IMR-90 (cell line): ENCODE measurements at regions of chr2 and their contacts with region 1.

Region 1: GRCh38 chr2:69026026-69026425 is 13.0 kb downstream of the ANTXR1 start:
- DNase-seq: peak; percentile 46
- ATAC-seq: peak; percentile 70
- H3K4me3 ChIP-seq: no peak overlapping the region
- H3K27ac ChIP-seq: no peak overlapping the region
- H3K4me1 ChIP-seq: peaks cover 18% of the 10 kb centered on the region
- H3K27me3 ChIP-seq: no peaks in the 10 kb centered on the region
- CTCF ChIP-seq: peak; percentile 56
- POLR2A ChIP-seq: no peak
- RAD21 ChIP-seq: peak; percentile 81

Region 2: DNA sequence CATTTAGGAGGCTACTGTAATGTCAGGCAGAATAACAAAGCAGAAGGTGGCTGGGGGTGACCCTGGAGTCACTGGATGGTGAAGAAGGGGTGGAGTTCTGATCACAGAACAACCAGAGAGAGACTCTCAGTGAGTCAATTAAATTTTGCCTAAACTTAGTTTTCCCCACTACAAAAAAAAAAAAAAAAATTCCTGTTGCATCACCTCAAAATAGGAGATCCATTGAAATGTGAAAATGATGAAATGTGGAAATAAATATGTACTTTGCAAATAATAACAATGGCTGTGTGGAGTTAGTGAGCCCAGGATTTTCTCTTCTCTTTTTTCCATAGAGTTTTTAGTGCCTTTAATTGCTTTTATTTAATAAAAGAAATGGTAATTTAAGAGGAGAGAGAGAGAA is 195.5 kb after region 1 on chr2:
- CTCF ChIA-PET with region 1: no interaction called
- POLR2A ChIA-PET with region 1: interaction called, 29 read pairs
- dilution Hi-C with region 1: no loop called
- in situ Hi-C with region 1: no loop called
- intact Hi-C with region 1: no loop called
- DNase-seq: no peak
- ATAC-seq: no peak; the same call in 1 of the 2 replicates
- H3K4me3 ChIP-seq: no peak overlapping the region
- H3K27ac ChIP-seq: peak overlapping the region; percentile 98
- H3K4me1 ChIP-seq: peaks cover 34% of the 10 kb centered on the region
- H3K27me3 ChIP-seq: no peaks in the 10 kb centered on the region
- CTCF ChIP-seq: no peak
- POLR2A ChIP-seq: no peak
- RAD21 ChIP-seq: no peak